Posterior vena cava (tissue), 2 donors: ENCODE measurements at regions of chr3 and their contacts with region 1.

Region 1: GRCh38 chr3:130404401-130404800 is 58.9 kb downstream of the COL6A5 start:
- DNase-seq: no peak

Region 2: DNA sequence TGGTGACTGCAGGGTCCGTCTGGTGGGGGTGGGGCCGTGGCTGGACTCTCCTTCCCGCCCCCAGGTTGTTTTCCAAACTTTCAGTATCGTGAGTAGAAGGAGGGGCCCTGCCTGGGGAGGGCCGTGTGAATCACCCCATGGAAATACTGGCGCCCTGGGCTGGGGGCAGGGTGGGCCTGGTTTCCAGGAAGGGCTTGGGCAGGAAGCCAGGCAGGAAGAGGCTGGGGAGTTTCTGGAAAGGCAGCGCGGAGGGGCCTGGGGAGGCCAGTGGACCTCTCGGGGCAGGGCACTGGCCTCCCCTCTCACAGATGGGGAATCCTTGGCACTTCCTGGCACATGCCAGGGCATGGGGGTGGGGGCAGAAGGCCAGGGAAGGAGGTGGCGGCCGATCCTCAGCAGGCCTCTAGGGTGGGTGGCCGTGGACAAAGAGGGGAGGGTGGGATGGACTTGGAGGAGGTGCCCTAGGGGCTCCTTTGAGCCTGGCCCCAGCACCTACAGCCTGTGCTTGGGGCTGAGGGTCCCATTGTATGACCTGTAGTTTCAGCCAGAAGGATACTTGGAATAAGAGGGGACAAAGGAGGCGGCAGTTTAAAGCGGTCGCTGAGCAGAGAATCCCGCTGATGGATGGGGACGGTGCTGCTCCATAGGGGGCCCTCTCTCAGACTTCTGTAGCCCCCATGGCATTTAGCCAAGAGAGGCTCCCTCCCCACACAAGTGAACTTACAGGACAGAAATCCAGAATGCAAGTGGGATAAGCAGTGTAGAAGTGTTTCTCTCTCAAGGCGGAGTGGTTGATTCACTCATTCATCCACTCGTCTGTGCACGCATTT is 1854.9 kb before region 1 on chr3:
- intact Hi-C with region 1: loop called in 1 of 2 experiments (anchors 10 kb)
- DNase-seq: peak; percentile 81

Region 3: DNA sequence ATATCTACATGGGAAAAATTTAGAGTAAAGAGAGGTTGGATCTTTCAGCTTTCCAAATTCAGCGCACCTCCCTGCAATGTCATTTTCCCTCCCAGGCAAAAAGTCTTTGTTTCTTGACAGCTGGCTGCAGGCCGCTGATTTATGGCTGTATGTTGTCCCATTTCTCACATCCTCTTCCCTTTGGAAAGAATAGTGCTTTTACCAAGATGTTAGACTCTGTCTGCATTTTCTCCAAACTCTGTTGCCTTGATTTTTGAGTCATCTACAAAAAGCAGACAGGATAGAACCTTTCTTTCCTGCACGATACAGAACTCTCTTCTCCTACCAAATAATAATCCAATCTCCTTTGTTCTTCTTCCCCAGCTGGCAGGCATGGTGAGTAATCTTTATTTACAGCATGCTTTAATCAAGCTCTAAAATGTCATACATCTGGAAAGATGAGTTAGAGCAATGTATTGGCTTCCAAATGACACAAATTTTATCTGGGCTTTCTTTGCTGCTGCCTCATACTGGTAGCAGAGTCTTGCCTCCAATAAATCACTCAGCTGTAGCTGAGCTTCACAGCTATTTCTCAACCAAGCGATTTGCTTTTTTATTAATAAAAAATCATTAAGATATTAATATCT is 240.3 kb after region 1 on chr3:
- intact Hi-C with region 1: no loop called
- DNase-seq: no peak